Caco-2 (cell line): ENCODE measurements at regions of chr10 and their contacts with region 1.

Region 1: DNA sequence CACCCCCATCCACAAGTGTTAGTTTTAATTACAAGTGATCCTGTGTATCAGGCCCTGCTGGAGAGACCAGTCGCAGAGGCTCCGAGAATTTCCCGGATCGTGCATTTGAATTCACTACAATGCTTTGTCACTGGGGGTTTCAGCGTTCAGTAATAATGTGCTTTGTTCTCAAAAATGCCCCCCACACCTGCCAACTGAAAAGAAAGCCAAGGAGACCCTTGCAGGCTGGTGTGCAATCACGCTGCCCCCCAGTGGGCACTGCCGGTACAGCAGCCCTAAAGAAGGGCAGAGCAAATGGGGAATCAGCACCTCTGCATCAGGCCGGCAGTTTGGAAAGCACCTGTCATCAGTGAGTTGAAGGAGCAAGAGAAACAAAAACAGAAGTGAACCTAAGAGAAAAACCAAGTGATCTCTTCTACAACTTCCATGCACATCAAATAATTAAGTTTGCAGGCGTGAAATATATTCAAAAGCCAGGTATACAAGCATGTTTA is 177.6 kb downstream of the PARD3 start:
- DNase-seq: peak; percentile 63 to 88
- H3K4me3 ChIP-seq: no peak overlapping the region
- H3K4me3 Mint-ChIP-seq: no peak overlapping the region
- H3K27ac Mint-ChIP-seq: no peak overlapping the region
- H3K4me1 ChIP-seq: no peaks in the 10 kb centered on the region
- H3K4me1 Mint-ChIP-seq: peaks cover 13% of the 10 kb centered on the region
- H3K27me3 ChIP-seq: no peaks in the 10 kb centered on the region
- H3K27me3 Mint-ChIP-seq: no peaks in the 10 kb centered on the region
- CTCF ChIP-seq: peak; percentile 98 to 99

Region 2: GRCh38 chr10:34181553-34182300 is 455.7 kb before region 1 on chr10:
- CTCF ChIA-PET with region 1: no interaction called
- POLR2A ChIA-PET with region 1: no interaction called
- intact Hi-C with region 1: loop called (anchors 5 kb)
- DNase-seq: no peak
- H3K4me3 ChIP-seq: no peak overlapping the region
- H3K4me3 Mint-ChIP-seq: no peak overlapping the region
- H3K27ac Mint-ChIP-seq: no peak overlapping the region
- H3K4me1 ChIP-seq: peaks cover 20% of the 10 kb centered on the region
- H3K4me1 Mint-ChIP-seq: peaks cover 31% of the 10 kb centered on the region
- H3K27me3 ChIP-seq: no peaks in the 10 kb centered on the region
- H3K27me3 Mint-ChIP-seq: no peaks in the 10 kb centered on the region
- CTCF ChIP-seq: no peak

Region 3: DNA sequence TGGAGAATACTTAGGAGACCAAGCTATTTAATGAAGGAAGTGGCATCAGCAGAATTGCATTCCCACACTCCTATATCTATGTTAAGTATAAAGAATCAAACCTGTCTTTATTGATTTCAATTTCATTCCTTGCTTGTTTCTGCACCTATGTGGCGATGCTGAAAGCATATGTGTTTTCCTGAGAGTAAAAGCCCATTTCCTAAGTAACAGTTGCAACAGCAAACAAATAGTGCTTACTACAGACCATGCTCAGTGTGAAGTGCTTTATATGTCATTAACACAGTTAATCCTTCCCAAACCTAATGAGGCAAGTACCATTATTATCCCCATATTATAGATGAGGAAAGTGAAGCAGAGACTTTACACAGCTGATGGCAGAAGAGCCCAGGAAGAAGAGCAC is 374.5 kb before region 1 on chr10:
- CTCF ChIA-PET with region 1: no interaction called
- POLR2A ChIA-PET with region 1: no interaction called
- intact Hi-C with region 1: loop called (anchors 5 kb)
- DNase-seq: peak in 1 of 2 experiments; percentile 21
- H3K4me3 ChIP-seq: no peak overlapping the region
- H3K4me3 Mint-ChIP-seq: no peak overlapping the region
- H3K27ac Mint-ChIP-seq: no peak overlapping the region
- H3K4me1 ChIP-seq: no peaks in the 10 kb centered on the region
- H3K4me1 Mint-ChIP-seq: no peaks in the 10 kb centered on the region
- H3K27me3 ChIP-seq: no peaks in the 10 kb centered on the region
- H3K27me3 Mint-ChIP-seq: no peaks in the 10 kb centered on the region
- CTCF ChIP-seq: peak; percentile 16 to 43

Region 4: GRCh38 chr10:34397324-34397723 is 240.1 kb before region 1 on chr10:
- CTCF ChIA-PET with region 1: no interaction called
- POLR2A ChIA-PET with region 1: no interaction called
- intact Hi-C with region 1: loop called (anchors 5 kb)
- DNase-seq: no peak
- H3K4me3 ChIP-seq: no peak overlapping the region
- H3K4me3 Mint-ChIP-seq: no peak overlapping the region
- H3K27ac Mint-ChIP-seq: no peak overlapping the region
- H3K4me1 ChIP-seq: no peaks in the 10 kb centered on the region
- H3K4me1 Mint-ChIP-seq: no peaks in the 10 kb centered on the region
- H3K27me3 ChIP-seq: no peaks in the 10 kb centered on the region
- H3K27me3 Mint-ChIP-seq: no peaks in the 10 kb centered on the region
- CTCF ChIP-seq: no peak

Region 5: DNA sequence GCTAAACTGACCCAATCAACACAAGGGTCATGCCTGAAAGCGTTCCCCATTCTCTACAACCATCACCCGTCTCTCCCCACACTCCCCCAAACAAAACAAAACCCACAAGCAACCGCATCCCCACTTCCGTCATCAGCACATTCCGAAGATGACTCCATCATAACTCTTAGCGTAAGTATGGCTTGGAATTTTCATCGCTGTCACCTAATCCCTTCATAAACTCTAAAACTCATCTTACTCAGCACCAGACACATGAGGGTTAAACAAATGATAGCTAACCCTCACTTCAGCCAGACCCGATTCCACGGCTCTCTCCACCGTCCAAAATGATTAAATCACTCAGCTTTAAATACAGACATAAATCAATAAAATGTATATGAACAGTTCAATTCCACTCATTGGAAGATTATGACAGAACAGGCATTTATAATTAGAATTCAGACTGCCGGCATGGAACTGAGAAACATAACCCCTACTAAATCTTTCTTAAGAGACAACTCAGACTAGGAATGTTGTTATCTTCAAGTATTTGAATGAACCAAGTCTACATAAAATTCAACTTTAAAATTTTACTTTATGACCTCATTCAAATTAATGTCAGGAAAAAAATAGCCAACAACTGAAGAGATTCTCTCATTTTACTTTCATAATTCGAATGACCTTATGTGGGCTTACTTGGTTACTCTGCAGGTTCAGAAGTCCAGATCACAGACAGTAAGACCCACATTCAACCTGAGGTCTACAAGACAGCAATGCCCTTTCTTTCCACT is 38.3 kb before region 1 on chr10:
- CTCF ChIA-PET with region 1: no interaction called
- POLR2A ChIA-PET with region 1: no interaction called
- intact Hi-C with region 1: no loop called
- DNase-seq: no peak
- H3K4me3 ChIP-seq: no peak overlapping the region
- H3K4me3 Mint-ChIP-seq: no peak overlapping the region
- H3K27ac Mint-ChIP-seq: peak overlapping the region; percentile 13
- H3K4me1 ChIP-seq: no peaks in the 10 kb centered on the region
- H3K4me1 Mint-ChIP-seq: peaks cover 11% of the 10 kb centered on the region
- H3K27me3 ChIP-seq: no peaks in the 10 kb centered on the region
- H3K27me3 Mint-ChIP-seq: no peaks in the 10 kb centered on the region
- CTCF ChIP-seq: no peak